ENCODE measurements at regions of chr1 and their contacts with region 1.

Region 1: DNA sequence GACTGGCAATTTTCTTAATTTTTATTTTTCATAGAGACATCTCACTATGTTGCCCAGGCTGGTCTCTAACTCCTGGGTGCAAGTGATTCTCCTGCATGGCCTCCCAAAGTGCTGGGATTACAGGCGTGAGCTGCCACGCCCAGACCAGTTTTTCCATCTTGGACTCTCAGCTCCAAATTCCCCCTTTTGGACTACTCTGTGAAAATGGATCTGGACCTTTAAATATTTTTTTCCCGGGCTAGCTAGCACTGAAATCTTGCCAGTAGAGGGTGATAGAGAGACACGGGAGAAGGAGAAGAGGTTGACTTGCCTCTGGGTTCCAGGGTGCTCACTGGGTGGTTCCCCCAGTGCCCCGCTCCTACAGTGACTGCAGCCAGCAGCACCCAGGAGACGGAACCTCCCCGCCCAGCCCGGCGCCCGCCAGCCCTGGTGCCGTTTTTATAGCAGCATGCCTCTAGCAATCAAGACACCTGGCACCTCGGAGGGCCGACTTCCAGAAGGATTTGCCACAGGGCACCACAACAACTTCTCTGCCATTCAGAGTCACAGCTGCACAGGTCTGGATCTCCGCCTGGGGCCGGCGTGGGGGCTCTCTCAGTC is 34.7 kb upstream of the SCCPDH start:
- DNase-seq: no peak

Region 2: GRCh38 chr1:246647113-246647512 is 42.4 kb before region 1 on chr1:
- intact Hi-C with region 1: no loop called
- DNase-seq: peak; percentile 82

Region 3: GRCh38 chr1:246753670-246754535 is 64.4 kb after region 1 on chr1:
- intact Hi-C with region 1: loop called (anchors 2 kb)
- DNase-seq: no peak

Region 4: GRCh38 chr1:246773213-246773641 is 83.7 kb after region 1 on chr1:
- intact Hi-C with region 1: no loop called
- DNase-seq: no peak